Naive thymus-derived CD4-positive, alpha-beta T cell (primary cell): ENCODE measurements at regions of chr11 and their contacts with region 1.

Region 1: GRCh38 chr11:111601979-111602864 is at the start of gene SIK2:
- DNase-seq: peak; percentile 77 to 90 (median 81)
- ATAC-seq: peak; percentile 93
- H3K4me3 ChIP-seq: peak within 1 kb of the TSS; percentile 77
- H3K4me3 Mint-ChIP-seq: peak within 1 kb of the TSS; percentile 92 to 99 (median 96)
- H3K27ac ChIP-seq: peak within 1 kb of the TSS; percentile 93
- H3K27ac Mint-ChIP-seq: peak within 1 kb of the TSS; percentile 84 to 99 (median 95)
- H3K4me1 ChIP-seq: peaks cover 8 to 11% of the 10 kb centered on the region in 2 donors
- H3K4me1 Mint-ChIP-seq: peaks cover 16 to 33% (median 25%) of the 10 kb centered on the region in 7 donors
- H3K27me3 ChIP-seq: no peaks in the 10 kb centered on the region
- H3K27me3 Mint-ChIP-seq: peaks cover 0 to 6% (median 0%) of the 10 kb centered on the region in 5 donors
- total RNA-seq, gene SIK2: 7.3 to 12.9 (median 9.8) TPM

Region 2: GRCh38 chr11:111494040-111494439 is 108.2 kb before region 1 on chr11:
- CTCF ChIA-PET with region 1: no interaction called
- POLR2A ChIA-PET with region 1: no interaction called
- intact Hi-C with region 1: no loop called
- DNase-seq: no peak
- ATAC-seq: no peak
- H3K4me3 ChIP-seq: no peak overlapping the region
- H3K4me3 Mint-ChIP-seq: no peak overlapping the region
- H3K27ac ChIP-seq: no peak overlapping the region
- H3K27ac Mint-ChIP-seq: no peak overlapping the region
- H3K4me1 ChIP-seq: no peaks in the 10 kb centered on the region
- H3K4me1 Mint-ChIP-seq: no peaks in the 10 kb centered on the region
- H3K27me3 ChIP-seq: no peaks in the 10 kb centered on the region
- H3K27me3 Mint-ChIP-seq: peaks cover 15 to 46% (median 25%) of the 10 kb centered on the region in 5 donors

Region 3: GRCh38 chr11:111565114-111565720 is 37.0 kb before region 1 on chr11:
- CTCF ChIA-PET with region 1: no interaction called
- POLR2A ChIA-PET with region 1: no interaction called
- intact Hi-C with region 1: loop called in 1 of 2 experiments (anchors 1 kb)
- DNase-seq: peak; percentile 11 to 64 (median 54)
- ATAC-seq: peak; percentile 60
- H3K4me3 ChIP-seq: no peak overlapping the region
- H3K4me3 Mint-ChIP-seq: no peak overlapping the region
- H3K27ac ChIP-seq: no peak overlapping the region
- H3K27ac Mint-ChIP-seq: no peak overlapping the region
- H3K4me1 ChIP-seq: no peaks in the 10 kb centered on the region
- H3K4me1 Mint-ChIP-seq: peaks cover 0 to 1% (median 0%) of the 10 kb centered on the region in 7 donors
- H3K27me3 ChIP-seq: no peaks in the 10 kb centered on the region
- H3K27me3 Mint-ChIP-seq: peaks cover 0 to 3% (median 0%) of the 10 kb centered on the region in 5 donors

Region 4: GRCh38 chr11:111766093-111766833 is 164.0 kb after region 1 on chr11 and contains the start of gene PPP2R1B:
- CTCF ChIA-PET with region 1: no interaction called
- POLR2A ChIA-PET with region 1: interaction called, 6 read pairs
- intact Hi-C with region 1: loop called (anchors 1 kb)
- DNase-seq: peak; percentile 50 to 78 (median 69)
- ATAC-seq: peak; percentile 98
- H3K4me3 ChIP-seq: peak within 1 kb of the TSS; percentile 95
- H3K4me3 Mint-ChIP-seq: peak within 1 kb of the TSS; percentile 94 to 100 (median 98)
- H3K27ac ChIP-seq: peak within 1 kb of the TSS; percentile 86
- H3K27ac Mint-ChIP-seq: peak within 1 kb of the TSS; percentile 83 to 99 (median 95)
- H3K4me1 ChIP-seq: peaks cover 7% of the 10 kb centered on the region in 2 donors
- H3K4me1 Mint-ChIP-seq: peaks cover 25 to 48% (median 38%) of the 10 kb centered on the region in 7 donors
- H3K27me3 ChIP-seq: no peaks in the 10 kb centered on the region
- H3K27me3 Mint-ChIP-seq: no peaks in the 10 kb centered on the region
- total RNA-seq, gene PPP2R1B: 25.8 to 49.2 (median 34.0) TPM

Region 5: DNA sequence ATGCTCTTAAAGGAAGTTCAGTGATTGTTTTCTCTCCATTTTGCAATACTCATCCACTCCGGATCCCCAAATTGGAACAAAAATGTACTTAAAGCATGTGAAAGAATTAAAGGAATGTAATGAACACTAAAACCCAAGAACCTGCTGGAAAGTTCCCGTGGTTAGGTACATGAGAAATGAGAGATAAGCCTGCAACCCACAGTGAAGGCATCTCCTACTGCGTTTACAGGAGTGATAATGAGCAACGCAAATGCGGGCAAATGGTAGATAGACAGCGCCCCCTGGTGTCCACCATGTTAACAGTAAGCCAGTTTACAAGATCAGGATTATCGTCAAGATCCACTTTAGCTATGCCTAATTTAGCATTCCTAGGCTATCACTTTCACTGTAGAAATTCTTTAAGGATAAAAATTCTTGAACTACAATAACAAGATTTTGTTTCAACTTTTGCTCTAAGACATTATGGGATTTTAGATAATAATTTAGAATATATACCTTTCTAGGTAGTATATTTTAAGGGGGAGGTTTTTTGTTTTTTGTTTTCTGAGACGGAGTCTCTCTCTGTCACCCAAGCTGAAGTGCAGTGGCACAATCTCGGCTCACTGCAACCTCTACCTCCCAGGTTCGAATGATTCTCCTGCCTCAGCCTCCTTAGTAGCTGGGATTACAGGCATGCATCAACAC is 239.3 kb after region 1 on chr11:
- CTCF ChIA-PET with region 1: interaction called, 5 read pairs
- POLR2A ChIA-PET with region 1: no interaction called
- intact Hi-C with region 1: loop called (anchors 1 kb)
- DNase-seq: peak; percentile 56 to 80 (median 76)
- ATAC-seq: peak; percentile 93
- H3K4me3 ChIP-seq: no peak overlapping the region
- H3K4me3 Mint-ChIP-seq: no peak overlapping the region
- H3K27ac ChIP-seq: no peak overlapping the region
- H3K27ac Mint-ChIP-seq: peak overlapping the region in 2 of 9 donors; percentile 14 to 59
- H3K4me1 ChIP-seq: no peaks in the 10 kb centered on the region
- H3K4me1 Mint-ChIP-seq: peaks cover 0 to 14% (median 4%) of the 10 kb centered on the region in 7 donors
- H3K27me3 ChIP-seq: no peaks in the 10 kb centered on the region
- H3K27me3 Mint-ChIP-seq: no peaks in the 10 kb centered on the region

Region 6: DNA sequence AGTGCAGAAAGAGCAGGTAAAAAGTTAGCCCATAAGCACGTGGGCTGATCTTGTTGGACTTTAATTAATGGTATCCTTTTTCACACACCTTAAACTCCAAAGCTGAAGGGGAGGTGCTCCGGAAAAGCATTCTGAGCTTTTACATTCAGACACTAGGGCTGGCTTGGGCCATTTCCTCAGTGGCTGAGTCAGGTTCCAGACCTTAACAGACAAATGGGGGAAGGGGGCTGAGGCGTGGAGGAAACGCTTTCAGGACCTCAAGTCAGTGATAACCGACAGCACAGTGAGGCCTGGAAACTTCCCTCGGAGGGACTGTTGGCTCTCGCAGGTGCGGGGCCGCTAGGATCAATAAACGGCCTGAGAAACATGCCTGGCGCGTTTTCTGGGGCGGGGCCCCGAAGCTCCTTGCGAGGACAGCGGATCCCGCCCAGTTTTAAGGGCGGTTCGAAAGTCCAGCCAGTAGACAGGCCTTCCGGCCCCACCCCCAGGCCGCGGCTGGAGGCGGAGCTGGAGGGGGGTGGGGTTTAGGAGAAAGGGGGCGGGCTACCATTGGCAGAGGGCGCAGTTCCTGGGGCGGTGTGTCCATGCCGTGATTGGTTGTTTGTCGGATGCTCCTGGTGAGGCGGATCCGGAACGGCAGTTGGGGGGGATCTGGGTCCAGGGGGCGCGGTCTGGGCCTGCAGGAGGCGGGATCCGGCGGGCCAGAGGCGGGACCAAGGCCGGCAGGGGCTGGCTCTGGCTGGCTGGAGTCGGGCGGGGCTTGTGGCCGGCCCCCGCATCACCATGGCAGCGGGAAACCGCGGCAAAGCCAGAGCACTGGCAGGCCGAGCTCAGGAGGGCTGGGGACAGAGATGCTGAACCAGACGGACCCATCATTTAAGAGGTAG is 324.5 kb after region 1 on chr11:
- CTCF ChIA-PET with region 1: no interaction called
- POLR2A ChIA-PET with region 1: interaction called, 4 read pairs
- intact Hi-C with region 1: loop called in 1 of 2 experiments (anchors 1 kb)
- DNase-seq: peak; percentile 91 to 98 (median 96)
- ATAC-seq: peak; percentile 96
- H3K4me3 ChIP-seq: peak overlapping the region; percentile 61
- H3K4me3 Mint-ChIP-seq: peak overlapping the region; percentile 76 to 91 (median 87)
- H3K27ac ChIP-seq: peak overlapping the region; percentile 76
- H3K27ac Mint-ChIP-seq: peak overlapping the region; percentile 83 to 96 (median 92)
- H3K4me1 ChIP-seq: peaks cover 0 to 5% of the 10 kb centered on the region in 2 donors
- H3K4me1 Mint-ChIP-seq: peaks cover 0 to 19% (median 16%) of the 10 kb centered on the region in 7 donors
- H3K27me3 ChIP-seq: no peaks in the 10 kb centered on the region
- H3K27me3 Mint-ChIP-seq: peaks cover 0 to 5% (median 0%) of the 10 kb centered on the region in 5 donors

Region 7: GRCh38 chr11:112086422-112087191 is 484.4 kb after region 1 on chr11 and contains the starts of genes SDHD and TIMM8B:
- CTCF ChIA-PET with region 1: no interaction called
- POLR2A ChIA-PET with region 1: no interaction called
- intact Hi-C with region 1: loop called (anchors 5 kb)
- DNase-seq: peak; percentile 90 to 98 (median 97)
- ATAC-seq: peak; percentile 94
- H3K4me3 ChIP-seq: peak within 1 kb of the TSS; percentile 99
- H3K4me3 Mint-ChIP-seq: peak within 1 kb of the TSS; percentile 90 to 100 (median 98)
- H3K27ac ChIP-seq: peak within 1 kb of the TSS; percentile 76
- H3K27ac Mint-ChIP-seq: peak within 1 kb of the TSS; percentile 92 to 99 (median 96)
- H3K4me1 ChIP-seq: peaks cover 21 to 23% of the 10 kb centered on the region in 2 donors
- H3K4me1 Mint-ChIP-seq: peaks cover 44 to 69% (median 62%) of the 10 kb centered on the region in 7 donors
- H3K27me3 ChIP-seq: no peaks in the 10 kb centered on the region
- H3K27me3 Mint-ChIP-seq: peaks cover 0 to 2% (median 0%) of the 10 kb centered on the region in 5 donors
- total RNA-seq, gene SDHD: 39.6 to 84.4 (median 65.8) TPM
- total RNA-seq, gene TIMM8B: 15.5 to 61.1 (median 24.3) TPM